PC-9 (cell line): ENCODE measurements at regions of chr14 and their contacts with region 1.

Region 1: GRCh38 chr14:47438650-47439140 is 236.7 kb downstream of the MDGA2 start:
- DNase-seq: peak in 1 of 2 experiments; percentile 40
- H3K4me3 ChIP-seq: no peak overlapping the region
- H3K27ac ChIP-seq: no peak overlapping the region
- H3K4me1 ChIP-seq: no peaks in the 10 kb centered on the region
- H3K27me3 ChIP-seq: no peaks in the 10 kb centered on the region
- CTCF ChIP-seq: no peak

Region 2: GRCh38 chr14:46063872-46064271 is 1374.8 kb before region 1 on chr14:
- CTCF ChIA-PET with region 1: no interaction called
- POLR2A ChIA-PET with region 1: no interaction called
- intact Hi-C with region 1: loop called (anchors 10 kb)
- DNase-seq: peak in 1 of 2 experiments; percentile 2
- H3K4me3 ChIP-seq: no peak overlapping the region
- H3K27ac ChIP-seq: no peak overlapping the region
- H3K4me1 ChIP-seq: no peaks in the 10 kb centered on the region
- H3K27me3 ChIP-seq: no peaks in the 10 kb centered on the region
- CTCF ChIP-seq: no peak

Region 3: GRCh38 chr14:47422191-47422590 is 16.5 kb before region 1 on chr14:
- CTCF ChIA-PET with region 1: no interaction called
- POLR2A ChIA-PET with region 1: no interaction called
- intact Hi-C with region 1: no loop called
- DNase-seq: no peak
- H3K4me3 ChIP-seq: no peak overlapping the region
- H3K27ac ChIP-seq: no peak overlapping the region
- H3K4me1 ChIP-seq: no peaks in the 10 kb centered on the region
- H3K27me3 ChIP-seq: no peaks in the 10 kb centered on the region
- CTCF ChIP-seq: no peak